ENCODE measurements at regions of chr2 and their contacts with region 1.

Region 1: DNA sequence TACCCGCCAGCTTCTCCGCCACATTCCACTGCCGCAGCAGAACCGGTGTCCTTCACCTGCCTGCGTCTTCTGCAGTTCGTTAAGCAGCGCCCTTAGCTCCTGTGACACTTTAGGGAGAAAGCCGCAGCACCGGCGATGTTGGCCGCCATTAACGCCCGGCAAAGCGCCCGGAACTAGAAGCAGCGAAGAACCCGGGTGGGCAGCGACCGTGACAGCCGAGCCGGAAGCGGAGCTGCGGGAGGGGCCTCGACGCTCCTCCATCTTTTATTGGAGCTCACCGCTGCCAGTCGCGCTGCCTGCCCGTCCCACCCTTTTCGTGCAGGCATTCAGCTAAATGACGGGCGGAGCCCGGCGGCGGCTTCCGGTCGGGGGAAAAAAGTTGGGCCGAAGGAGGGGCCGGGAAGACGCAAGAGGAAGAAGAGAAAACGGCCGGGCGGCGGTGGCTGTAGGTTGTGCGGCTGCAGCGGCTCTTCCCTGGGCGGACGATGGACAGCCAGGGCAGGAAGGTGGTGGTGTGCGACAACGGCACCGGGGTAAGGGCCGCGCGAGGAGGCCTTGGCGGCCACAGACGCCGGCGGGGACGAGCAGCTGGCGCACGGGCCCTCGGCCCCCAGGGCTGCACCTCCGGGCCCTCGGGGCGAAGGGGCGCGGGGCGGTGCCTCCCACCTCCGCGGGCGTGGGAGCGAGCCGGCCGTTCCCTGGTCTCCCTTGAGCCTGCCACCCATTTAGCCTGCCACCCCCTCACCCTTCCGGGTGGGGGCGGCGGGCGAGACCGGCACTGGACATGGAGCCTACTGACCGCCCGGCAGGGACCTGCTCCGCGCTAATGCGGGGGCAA is at the start of gene ACTR2:
- DNase-seq: peak; percentile 90
- ATAC-seq: peak; percentile 92
- H3K4me3 ChIP-seq: peak within 1 kb of the TSS; percentile 97
- H3K27ac ChIP-seq: peak within 1 kb of the TSS; percentile 98
- H3K4me1 ChIP-seq: peaks cover 12% of the 10 kb centered on the region
- H3K27me3 ChIP-seq: no peaks in the 10 kb centered on the region
- CTCF ChIP-seq: no peak
- EP300 ChIP-seq: 0 out of 4 replicates have a peak, but pooled peaks of 1 of the 2 experiments have one; percentile 22
- POLR2A ChIP-seq: peak; percentile 98
- RAD21 ChIP-seq: no peak
- polyA plus RNA-seq, gene ACTR2: 94.2 to 124 TPM

Region 2: GRCh38 chr2:64932371-64933216 is 295.1 kb before region 1 on chr2:
- CTCF ChIA-PET with region 1: no interaction called
- POLR2A ChIA-PET with region 1: interaction called, 8 read pairs
- RAD21 ChIA-PET with region 1: no interaction called
- SMC1A ChIA-PET with region 1: no interaction called
- in situ Hi-C with region 1: no loop called
- intact Hi-C with region 1: loop called (anchors 5 kb)
- DNase-seq: peak; percentile 98
- ATAC-seq: peak; percentile 81
- H3K4me3 ChIP-seq: peak overlapping the region; percentile 96
- H3K27ac ChIP-seq: peak overlapping the region; percentile 95
- H3K4me1 ChIP-seq: peaks cover 28% of the 10 kb centered on the region
- H3K27me3 ChIP-seq: no peaks in the 10 kb centered on the region
- CTCF ChIP-seq: no peak
- EP300 ChIP-seq: peak; percentile 62 to 83; a peak in 3 of 4 replicates
- POLR2A ChIP-seq: peak; percentile 84
- RAD21 ChIP-seq: 0 out of 2 replicates have a peak, but pooled peaks have one; percentile 1